Caco-2 (cell line): ENCODE measurements at regions of chr2 and their contacts with region 1.

Region 1: DNA sequence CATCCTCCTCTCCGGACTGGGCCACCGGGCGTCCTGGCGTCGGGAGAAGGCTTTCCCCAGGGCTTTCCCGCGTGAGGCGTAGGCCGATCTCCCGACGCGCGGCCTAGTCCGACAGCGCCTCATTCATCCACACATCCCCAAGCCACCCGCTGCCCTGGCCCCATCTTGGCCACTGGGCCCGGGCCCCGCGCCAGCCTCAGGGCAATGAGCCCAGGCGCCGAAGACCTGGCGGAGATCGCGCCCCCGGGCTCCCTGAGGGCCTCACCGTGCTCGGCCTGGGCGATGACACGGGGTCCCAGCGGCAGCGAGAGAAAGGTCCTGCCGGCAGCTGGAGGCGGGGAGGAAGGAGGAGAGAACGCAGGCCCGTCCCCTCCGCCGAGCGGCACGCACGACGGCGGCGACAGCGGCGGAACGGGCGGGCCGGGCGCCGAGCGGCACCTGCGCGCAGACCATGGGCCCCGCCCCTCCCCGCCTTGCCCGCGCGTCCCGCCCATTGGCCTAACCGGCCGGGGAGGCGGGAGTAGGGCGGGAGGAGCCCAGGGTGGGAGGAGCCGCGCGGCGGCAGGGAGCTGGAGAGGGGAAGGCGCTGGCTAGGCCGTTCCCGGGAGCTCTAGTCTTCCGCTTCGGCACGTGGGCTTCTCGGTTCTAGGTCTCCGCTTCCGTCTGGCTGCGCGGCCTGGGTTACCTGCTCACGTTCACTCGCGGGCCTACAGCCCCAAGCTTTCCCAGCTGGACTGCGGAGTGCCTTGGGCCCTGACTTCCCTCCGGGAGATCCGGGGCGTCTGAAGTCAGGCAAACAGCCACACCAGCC is at the start of gene OLA1:
- DNase-seq: peak; percentile 96 to 99
- H3K4me3 ChIP-seq: peak within 1 kb of the TSS; percentile 88
- H3K4me3 Mint-ChIP-seq: peak within 1 kb of the TSS; percentile 92
- H3K27ac Mint-ChIP-seq: peak within 1 kb of the TSS; percentile 85
- H3K4me1 ChIP-seq: peaks cover 10% of the 10 kb centered on the region; the same call in 1 of the 2 replicates
- H3K4me1 Mint-ChIP-seq: peaks cover 12% of the 10 kb centered on the region
- H3K27me3 ChIP-seq: no peaks in the 10 kb centered on the region
- H3K27me3 Mint-ChIP-seq: no peaks in the 10 kb centered on the region
- CTCF ChIP-seq: no peak
- total RNA-seq, gene OLA1: 177 and 182 TPM in 2 replicates

Region 2: DNA sequence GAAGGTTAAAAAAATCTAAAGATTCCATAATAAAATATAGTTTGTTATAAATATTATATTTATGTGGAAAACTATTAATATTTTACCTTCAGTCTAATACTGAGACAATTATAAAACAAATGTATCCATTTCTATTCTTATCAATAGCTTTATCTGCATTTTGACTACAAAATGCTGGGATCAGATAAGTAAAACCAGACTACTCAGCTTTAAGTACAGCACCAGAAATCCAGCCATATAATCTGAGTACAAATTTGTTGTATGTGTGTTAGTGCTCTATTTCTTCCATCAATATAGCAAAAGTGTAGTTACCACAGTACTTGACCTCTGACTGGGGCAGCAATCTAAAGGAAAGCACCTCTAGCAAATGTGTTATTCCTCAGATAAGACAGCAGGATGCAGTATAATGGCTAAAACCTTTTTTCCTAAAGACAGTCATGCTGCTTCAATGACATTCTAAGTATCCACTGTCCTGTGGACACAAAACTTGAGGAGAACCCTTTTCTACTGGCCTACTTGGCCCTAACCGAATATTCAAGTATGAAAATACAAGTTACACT is 68.1 kb before region 1 on chr2:
- CTCF ChIA-PET with region 1: no interaction called
- POLR2A ChIA-PET with region 1: no interaction called
- intact Hi-C with region 1: loop called (anchors 5 kb)
- DNase-seq: peak in 1 of 2 experiments; percentile 20
- H3K4me3 ChIP-seq: no peak overlapping the region
- H3K4me3 Mint-ChIP-seq: no peak overlapping the region
- H3K27ac Mint-ChIP-seq: no peak overlapping the region
- H3K4me1 ChIP-seq: peaks cover 9% of the 10 kb centered on the region; the same call in 1 of the 2 replicates
- H3K4me1 Mint-ChIP-seq: peaks cover 20% of the 10 kb centered on the region
- H3K27me3 ChIP-seq: no peaks in the 10 kb centered on the region
- H3K27me3 Mint-ChIP-seq: no peaks in the 10 kb centered on the region
- CTCF ChIP-seq: peak; percentile 32 to 43